ENCODE measurements at regions of chr11 and their contacts with region 1.

Region 1: GRCh38 chr11:126607374-126607773 is 251.9 kb downstream of the ST3GAL4 start:
- DNase-seq: peak; percentile 61 to 78
- H3K4me3 ChIP-seq: peak overlapping the region in 1 of 4 experiments; percentile 39; a peak in 2 of 8 replicates
- H3K27ac ChIP-seq: no peak overlapping the region
- H3K4me1 ChIP-seq: peaks cover 8 to 15% (median 11%) of the 10 kb centered on the region in 4 experiments
- H3K27me3 ChIP-seq: no peaks in the 10 kb centered on the region; a peak in 3 of 7 replicates
- CTCF ChIP-seq: peak; percentile 92 to 96 (median 95)
- EP300 ChIP-seq: no peak
- POLR2A ChIP-seq: no peak
- RAD21 ChIP-seq: peak; percentile 96 to 97

Region 2: DNA sequence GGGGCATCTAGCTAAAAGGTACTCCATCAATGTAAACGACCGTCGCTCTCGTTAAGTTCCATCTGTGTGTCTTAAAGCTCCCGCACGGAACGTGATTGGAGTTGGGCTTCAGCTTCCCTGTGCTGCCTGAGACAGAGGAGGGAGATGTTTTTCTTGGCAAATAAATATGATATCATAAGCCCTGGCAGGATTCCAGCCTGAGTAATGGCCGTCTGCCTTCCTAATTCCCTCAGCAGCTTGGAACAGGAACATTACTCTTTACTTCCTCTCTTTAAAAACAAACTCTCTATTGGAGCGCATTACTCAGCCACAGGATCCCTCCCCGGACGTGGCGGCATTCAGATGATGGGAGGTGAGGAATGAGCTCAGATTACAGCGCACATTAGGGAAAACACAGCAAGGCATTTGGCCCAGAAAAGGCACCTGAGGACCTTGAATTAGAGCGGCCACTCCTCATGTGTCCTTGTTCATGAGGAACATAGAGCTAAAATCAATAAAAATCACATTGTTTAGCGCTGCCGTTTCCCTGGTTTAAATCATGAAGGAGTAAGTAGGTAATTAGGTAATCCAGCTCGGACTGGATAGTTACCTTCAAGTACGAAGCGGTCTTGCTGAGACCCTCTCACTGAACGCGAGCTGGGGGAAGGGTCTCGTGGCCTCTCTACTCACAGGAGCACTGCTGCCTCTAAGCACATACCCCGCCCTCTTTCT is 21.4 kb before region 1 on chr11:
- CTCF ChIA-PET with region 1: interaction called, 142 read pairs
- POLR2A ChIA-PET with region 1: no interaction called
- DNase-seq: no peak
- H3K4me3 ChIP-seq: peak overlapping the region in 1 of 4 experiments; percentile 32; a peak in 3 of 8 replicates
- H3K27ac ChIP-seq: peak overlapping the region; percentile 65
- H3K4me1 ChIP-seq: peaks cover 12 to 35% (median 23%) of the 10 kb centered on the region in 4 experiments
- H3K27me3 ChIP-seq: no peaks in the 10 kb centered on the region
- CTCF ChIP-seq: no peak
- EP300 ChIP-seq: no peak
- POLR2A ChIP-seq: 0 out of 3 replicates have a peak, but pooled peaks of 1 of the 2 experiments have one; percentile 19
- RAD21 ChIP-seq: no peak

Region 3: GRCh38 chr11:126637795-126638175 is 30.4 kb after region 1 on chr11:
- CTCF ChIA-PET with region 1: interaction called, 28 read pairs
- POLR2A ChIA-PET with region 1: no interaction called
- DNase-seq: no peak
- H3K4me3 ChIP-seq: no peak overlapping the region
- H3K27ac ChIP-seq: no peak overlapping the region
- H3K4me1 ChIP-seq: peaks cover 0 to 15% (median 2%) of the 10 kb centered on the region in 4 experiments; a peak in 3 of 7 replicates
- H3K27me3 ChIP-seq: no peaks in the 10 kb centered on the region
- CTCF ChIP-seq: no peak
- EP300 ChIP-seq: no peak
- POLR2A ChIP-seq: no peak
- RAD21 ChIP-seq: no peak

Region 4: GRCh38 chr11:126716456-126717083 is 109.2 kb after region 1 on chr11:
- CTCF ChIA-PET with region 1: interaction called, 51 read pairs
- POLR2A ChIA-PET with region 1: no interaction called
- DNase-seq: peak in 1 of 2 experiments; percentile 83
- H3K4me3 ChIP-seq: no peak overlapping the region
- H3K27ac ChIP-seq: no peak overlapping the region
- H3K4me1 ChIP-seq: peaks cover 0 to 7% (median 0%) of the 10 kb centered on the region in 4 experiments; a peak in 2 of 7 replicates
- H3K27me3 ChIP-seq: no peaks in the 10 kb centered on the region
- CTCF ChIP-seq: peak; percentile 60 to 85 (median 78)
- EP300 ChIP-seq: no peak
- POLR2A ChIP-seq: no peak
- RAD21 ChIP-seq: peak; percentile 84 to 87

Region 5: DNA sequence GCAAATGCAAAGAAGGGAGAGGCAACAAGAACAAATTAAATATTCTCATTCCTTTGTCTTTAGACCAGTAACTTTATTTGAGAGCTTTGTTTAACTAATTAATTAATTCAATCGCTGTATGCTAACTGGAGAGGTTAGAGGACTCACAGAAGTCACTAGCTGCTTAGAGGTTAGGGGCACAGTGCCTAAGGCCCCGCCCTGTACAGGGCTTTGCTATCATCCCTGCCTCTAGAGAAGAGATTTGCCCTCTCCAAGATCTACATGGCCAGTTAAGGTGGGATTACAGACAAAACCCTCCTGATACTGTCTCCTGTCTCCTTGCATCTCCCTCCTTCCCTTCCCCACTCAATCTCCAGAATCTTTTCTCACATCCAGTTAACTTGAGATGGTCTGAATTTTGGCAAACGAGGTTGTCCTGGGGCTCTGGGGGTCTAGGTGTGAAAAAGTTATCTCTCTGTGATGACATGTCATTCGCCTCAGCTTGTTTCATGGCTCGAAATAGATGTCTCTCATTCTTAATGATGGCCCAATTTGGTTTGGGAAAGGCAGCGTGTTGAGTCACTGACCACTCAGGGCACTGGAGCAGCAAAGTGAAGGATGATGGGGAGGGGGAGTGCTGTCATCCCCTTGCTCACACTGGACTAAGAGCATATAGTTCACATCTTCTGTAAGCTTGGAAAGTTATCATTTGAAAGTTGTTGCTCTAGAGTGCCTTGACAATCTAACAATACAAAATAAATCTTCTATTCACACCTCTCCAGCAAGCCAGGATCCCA is 202.3 kb after region 1 on chr11:
- CTCF ChIA-PET with region 1: no interaction called
- POLR2A ChIA-PET with region 1: no interaction called
- DNase-seq: no peak
- H3K4me3 ChIP-seq: no peak overlapping the region
- H3K27ac ChIP-seq: no peak overlapping the region
- H3K4me1 ChIP-seq: no peaks in the 10 kb centered on the region
- H3K27me3 ChIP-seq: no peaks in the 10 kb centered on the region
- CTCF ChIP-seq: no peak
- EP300 ChIP-seq: no peak
- POLR2A ChIP-seq: no peak
- RAD21 ChIP-seq: no peak

Region 6: GRCh38 chr11:126862664-126863243 is 255.4 kb after region 1 on chr11:
- CTCF ChIA-PET with region 1: interaction called, 20 read pairs
- POLR2A ChIA-PET with region 1: no interaction called
- DNase-seq: peak; percentile 19 to 49
- H3K4me3 ChIP-seq: no peak overlapping the region
- H3K27ac ChIP-seq: no peak overlapping the region
- H3K4me1 ChIP-seq: peaks cover 0 to 3% (median 0%) of the 10 kb centered on the region in 4 experiments; a peak in 1 of 7 replicates
- H3K27me3 ChIP-seq: no peaks in the 10 kb centered on the region; a peak in 1 of 7 replicates
- CTCF ChIP-seq: peak; percentile 67 to 87 (median 77)
- EP300 ChIP-seq: no peak
- POLR2A ChIP-seq: no peak
- RAD21 ChIP-seq: peak; percentile 86 to 89